Colonic mucosa (tissue), 4 donors: ENCODE measurements at regions of chr15 and their contacts with region 1.

Region 1: DNA sequence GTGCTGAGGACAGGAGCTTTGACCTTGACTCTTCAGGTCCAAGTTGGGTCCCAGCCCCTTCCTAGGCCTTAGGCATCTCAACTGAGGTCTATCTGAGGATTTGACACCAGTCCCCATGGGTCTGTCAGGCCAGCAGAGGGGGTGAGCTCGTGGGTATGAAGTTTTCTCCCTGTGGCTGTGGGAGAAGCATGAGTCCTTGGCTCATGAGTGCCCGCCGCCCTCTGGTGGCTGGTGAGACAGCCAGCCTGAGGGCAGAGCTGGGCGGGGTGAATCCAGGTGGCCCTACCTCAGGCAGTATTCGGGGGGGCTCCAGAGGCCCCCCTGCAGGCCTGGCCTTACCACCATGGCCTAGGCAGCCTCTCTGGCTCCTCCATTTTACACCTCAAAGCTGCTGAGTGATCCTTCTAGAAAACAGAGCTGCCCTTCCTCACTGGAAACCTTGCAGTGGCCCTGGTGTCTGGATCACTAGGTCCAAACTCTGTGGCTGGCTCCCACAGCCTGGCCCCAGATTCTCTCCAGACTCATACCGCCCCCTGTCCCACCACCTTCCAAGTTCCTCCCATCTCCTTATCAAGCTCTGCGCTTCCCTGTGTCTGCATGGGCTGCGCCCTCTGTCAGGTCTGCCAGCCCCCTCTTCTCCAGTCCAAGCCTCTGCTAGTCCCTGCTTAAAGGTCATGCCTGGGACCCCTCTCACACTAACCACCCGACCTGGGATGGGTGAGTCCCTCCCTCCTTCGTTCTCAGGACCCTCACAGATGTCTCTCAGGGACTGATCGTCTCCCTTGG is 16.1 kb downstream of the SH2D7 start:
- DNase-seq: peak; percentile 87
- H3K4me3 ChIP-seq: no peak overlapping the region
- H3K27ac ChIP-seq: no peak overlapping the region
- H3K4me1 ChIP-seq: peaks cover 1% of the 10 kb centered on the region
- H3K27me3 ChIP-seq: no peaks in the 10 kb centered on the region
- CTCF ChIP-seq: peak; percentile 90

Region 2: GRCh38 chr15:77966540-77967290 is 141.8 kb before region 1 on chr15:
- intact Hi-C with region 1: loop called (anchors 2 kb)
- DNase-seq: peak; percentile 50
- H3K4me3 ChIP-seq: no peak overlapping the region
- H3K27ac ChIP-seq: no peak overlapping the region
- H3K4me1 ChIP-seq: no peaks in the 10 kb centered on the region
- H3K27me3 ChIP-seq: no peaks in the 10 kb centered on the region
- CTCF ChIP-seq: peak; percentile 86

Region 3: DNA sequence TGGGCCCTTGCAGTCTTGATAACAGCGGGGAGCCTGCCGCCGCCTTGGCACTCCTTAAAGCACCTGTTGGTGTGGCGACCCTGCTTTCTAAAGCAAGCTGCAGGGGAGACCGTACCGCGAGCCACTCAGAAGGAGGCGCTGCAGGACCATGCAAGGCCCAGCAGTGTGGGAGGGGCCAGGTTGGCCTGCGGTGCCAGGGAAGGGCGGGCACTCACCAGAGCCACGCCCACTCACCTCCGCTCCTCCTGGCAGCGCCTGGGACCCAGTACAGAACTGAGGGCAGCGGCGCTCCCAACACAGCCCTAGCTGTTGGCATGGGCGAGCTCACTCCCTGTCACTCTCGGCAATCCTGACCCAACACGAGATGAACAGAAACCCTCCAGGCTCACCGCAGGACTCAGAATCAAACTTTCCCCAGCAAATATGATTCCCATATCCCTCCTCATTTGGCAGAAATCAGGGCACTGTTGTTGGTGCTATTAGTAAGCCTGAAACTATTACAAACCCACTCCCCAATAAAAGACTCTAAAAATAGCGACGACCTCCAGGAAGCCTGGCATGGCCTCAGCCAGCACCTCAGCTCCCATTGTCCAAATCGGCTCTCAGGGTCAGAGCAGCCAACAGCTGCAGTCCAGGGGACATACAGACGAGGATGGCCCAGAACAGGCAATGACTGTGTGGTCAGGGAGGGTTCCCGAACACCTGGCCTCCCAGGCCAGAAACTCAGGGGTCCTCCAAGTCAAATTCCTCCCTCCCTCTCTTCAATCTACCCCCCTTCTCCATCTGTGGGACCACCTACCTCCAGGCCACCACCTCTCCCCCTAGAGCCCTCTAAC is 108.2 kb before region 1 on chr15:
- intact Hi-C with region 1: loop called (anchors 2 kb)
- DNase-seq: peak; percentile 93
- H3K4me3 ChIP-seq: no peak overlapping the region
- H3K27ac ChIP-seq: no peak overlapping the region
- H3K4me1 ChIP-seq: no peaks in the 10 kb centered on the region
- H3K27me3 ChIP-seq: no peaks in the 10 kb centered on the region
- CTCF ChIP-seq: peak; percentile 74

Region 4: GRCh38 chr15:78049691-78050440 is 58.6 kb before region 1 on chr15:
- intact Hi-C with region 1: loop called (anchors 10 kb)
- DNase-seq: no peak
- H3K4me3 ChIP-seq: no peak overlapping the region
- H3K27ac ChIP-seq: peak overlapping the region; percentile 61
- H3K4me1 ChIP-seq: peaks cover 28% of the 10 kb centered on the region
- H3K27me3 ChIP-seq: no peaks in the 10 kb centered on the region
- CTCF ChIP-seq: no peak

Region 5: GRCh38 chr15:78195735-78196201 is 87.3 kb after region 1 on chr15:
- intact Hi-C with region 1: loop called (anchors 1 kb)
- DNase-seq: peak; percentile 38
- H3K4me3 ChIP-seq: no peak overlapping the region
- H3K27ac ChIP-seq: no peak overlapping the region
- H3K4me1 ChIP-seq: no peaks in the 10 kb centered on the region
- H3K27me3 ChIP-seq: no peaks in the 10 kb centered on the region
- CTCF ChIP-seq: peak; percentile 74

Region 6: GRCh38 chr15:78241007-78241406 is 132.5 kb after region 1 on chr15:
- intact Hi-C with region 1: loop called (anchors 2 kb)
- DNase-seq: peak; percentile 94
- H3K4me3 ChIP-seq: no peak overlapping the region
- H3K27ac ChIP-seq: no peak overlapping the region
- H3K4me1 ChIP-seq: no peaks in the 10 kb centered on the region
- H3K27me3 ChIP-seq: no peaks in the 10 kb centered on the region
- CTCF ChIP-seq: peak; percentile 85

Region 7: GRCh38 chr15:78264304-78265136 is 156.0 kb after region 1 on chr15 and contains the start of gene DNAJA4:
- intact Hi-C with region 1: no loop called
- DNase-seq: peak; percentile 63
- H3K4me3 ChIP-seq: peak within 1 kb of the TSS; percentile 67
- H3K27ac ChIP-seq: peak within 1 kb of the TSS; percentile 55
- H3K4me1 ChIP-seq: peaks cover 7% of the 10 kb centered on the region
- H3K27me3 ChIP-seq: no peaks in the 10 kb centered on the region
- CTCF ChIP-seq: no peak
- total RNA-seq, gene DNAJA4: 42.6 to 54.5 TPM